ENCODE measurements at regions of chr12 and their contacts with region 1.

Region 1: DNA sequence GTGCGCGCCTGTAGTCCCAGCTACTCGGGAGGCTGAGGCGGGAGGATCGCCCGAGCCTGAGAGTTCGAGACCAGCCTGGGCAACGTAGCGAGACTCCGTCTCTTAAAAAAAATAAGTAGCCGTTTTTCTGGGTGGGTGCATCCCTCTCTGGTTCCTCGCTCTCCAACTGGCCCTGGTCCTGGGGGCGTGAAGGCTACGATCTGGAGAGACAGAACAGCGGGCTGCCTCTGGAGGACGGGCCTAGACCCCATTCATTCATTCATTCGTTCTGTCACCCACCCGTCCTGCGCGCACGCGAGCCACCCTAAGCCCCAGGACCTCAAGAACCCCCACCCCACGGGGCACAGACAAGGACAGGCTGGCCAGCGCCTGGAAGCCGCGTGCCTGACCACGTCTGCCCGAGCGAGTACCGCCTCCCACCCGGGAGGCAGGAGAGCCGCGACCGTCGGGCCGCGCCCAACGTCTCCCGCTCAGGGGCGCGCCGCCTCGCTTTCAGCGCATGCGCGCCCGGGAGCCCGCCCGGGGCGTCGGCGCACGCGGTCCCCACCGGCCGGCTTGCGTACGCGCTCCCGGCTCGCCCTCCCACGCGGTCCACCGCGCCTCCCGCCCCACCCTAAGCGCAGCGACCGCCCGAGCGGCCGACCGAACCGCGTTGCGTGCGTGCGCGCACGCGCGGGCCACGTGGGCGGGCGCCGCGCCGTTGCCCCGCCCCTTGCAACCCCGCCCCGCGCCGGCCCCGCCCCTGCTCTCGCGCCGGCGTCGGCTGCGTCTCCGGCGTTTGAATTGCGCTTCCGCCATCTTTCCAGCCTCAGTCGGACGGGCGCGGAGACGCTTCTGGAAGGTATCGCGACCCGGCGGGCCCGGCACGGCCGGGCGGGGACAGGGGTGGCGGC is at the start of gene RAN:
- DNase-seq: peak; percentile 87
- H3K4me3 Mint-ChIP-seq: peak within 1 kb of the TSS; percentile 99
- H3K27ac Mint-ChIP-seq: peak within 1 kb of the TSS; percentile 99
- H3K4me1 Mint-ChIP-seq: peaks cover 53% of the 10 kb centered on the region
- H3K27me3 Mint-ChIP-seq: no peaks in the 10 kb centered on the region
- total RNA-seq, gene RAN: 1,823 and 1,852 TPM in 2 replicates

Region 2: GRCh38 chr12:130775953-130776856 is 95.3 kb before region 1 on chr12:
- intact Hi-C with region 1: loop called (anchors 1 kb)
- DNase-seq: no peak
- H3K4me3 Mint-ChIP-seq: peak overlapping the region; percentile 69
- H3K27ac Mint-ChIP-seq: no peak overlapping the region
- H3K4me1 Mint-ChIP-seq: peaks cover 15% of the 10 kb centered on the region
- H3K27me3 Mint-ChIP-seq: peaks cover 26% of the 10 kb centered on the region

Region 3: DNA sequence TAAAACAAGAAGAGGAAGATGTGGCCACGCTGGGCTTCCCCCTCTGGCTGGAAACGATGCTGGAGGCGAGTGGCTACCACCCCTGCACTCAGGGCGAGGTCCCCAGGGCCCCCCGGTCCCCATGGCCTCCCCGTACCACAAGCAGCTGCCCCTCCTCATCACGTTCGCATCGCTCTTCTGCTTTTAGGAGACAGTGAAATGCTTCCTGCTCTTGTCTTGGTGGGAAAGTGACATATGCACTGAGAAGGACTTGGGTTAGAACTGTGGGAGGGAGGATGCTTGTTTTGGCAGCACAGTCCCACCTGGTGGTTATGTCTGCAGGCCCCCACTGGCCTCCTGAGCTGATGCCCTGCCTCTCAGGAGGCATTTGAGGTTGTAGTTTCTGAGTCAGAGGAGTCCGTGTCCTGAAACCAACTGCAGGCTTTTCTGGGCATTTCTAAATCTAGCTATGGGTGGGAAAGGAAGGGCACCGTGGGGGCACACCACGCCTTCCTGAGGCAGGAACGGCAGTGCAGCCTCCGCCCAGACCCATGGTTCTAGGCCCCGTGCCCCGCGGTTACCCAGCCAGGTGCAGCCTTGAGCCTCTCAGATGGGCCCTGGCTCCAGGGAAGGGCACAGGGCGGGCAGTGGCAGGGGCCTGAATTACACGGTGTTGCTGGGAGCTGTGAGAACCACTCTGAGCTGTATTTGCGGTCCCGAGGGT is 221.5 kb after region 1 on chr12:
- intact Hi-C with region 1: loop called (anchors 5 kb)
- DNase-seq: peak; percentile 3
- H3K4me3 Mint-ChIP-seq: peak overlapping the region; percentile 24
- H3K27ac Mint-ChIP-seq: peak overlapping the region; percentile 45
- H3K4me1 Mint-ChIP-seq: peaks cover 21% of the 10 kb centered on the region
- H3K27me3 Mint-ChIP-seq: no peaks in the 10 kb centered on the region

Region 4: DNA sequence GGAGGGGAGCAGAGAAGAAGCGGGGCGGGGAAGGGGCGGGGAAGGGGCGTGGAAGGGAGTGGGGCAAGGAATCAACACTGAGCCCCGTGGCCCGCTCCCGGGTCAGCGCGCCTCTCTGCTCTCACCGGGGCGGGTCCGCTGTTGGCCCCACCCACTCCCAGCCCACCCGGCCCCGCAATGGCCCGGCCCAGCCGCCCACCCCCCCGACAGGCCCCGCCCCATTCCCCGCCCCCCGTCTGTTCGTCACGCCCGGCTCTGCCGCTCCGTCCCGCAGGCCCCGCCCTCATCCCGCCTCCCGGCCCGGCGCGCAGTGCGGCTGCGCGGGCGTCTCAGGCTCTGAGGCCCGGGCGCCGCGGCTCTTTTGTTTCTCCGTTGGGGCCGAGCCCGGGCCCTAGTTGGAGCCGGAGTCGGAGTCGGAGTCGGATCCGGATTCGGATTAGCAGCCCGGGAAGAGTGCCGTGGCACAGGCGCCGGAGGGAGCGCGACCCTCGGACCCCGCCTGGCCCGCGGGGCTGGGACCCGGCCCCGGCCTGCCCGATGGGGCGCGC is 1022.9 kb after region 1 on chr12 and contains the start of gene ULK1:
- intact Hi-C with region 1: loop called (anchors 10 kb)
- DNase-seq: peak; percentile 91
- H3K4me3 Mint-ChIP-seq: peak within 1 kb of the TSS; percentile 86
- H3K27ac Mint-ChIP-seq: peak within 1 kb of the TSS; percentile 78
- H3K4me1 Mint-ChIP-seq: no peaks in the 10 kb centered on the region
- H3K27me3 Mint-ChIP-seq: peaks cover 5% of the 10 kb centered on the region
- total RNA-seq, gene ULK1: 28.4 TPM in 2 replicates

Region 5: GRCh38 chr12:132761032-132761920 is 1889.7 kb after region 1 on chr12 and contains the start of gene ANKLE2:
- intact Hi-C with region 1: loop called (anchors 10 kb)
- DNase-seq: peak; percentile 74
- H3K4me3 Mint-ChIP-seq: peak within 1 kb of the TSS; percentile 93
- H3K27ac Mint-ChIP-seq: peak within 1 kb of the TSS; percentile 96
- H3K4me1 Mint-ChIP-seq: peaks cover 24% of the 10 kb centered on the region
- H3K27me3 Mint-ChIP-seq: no peaks in the 10 kb centered on the region
- total RNA-seq, gene ANKLE2: 151 and 156 TPM in 2 replicates

Measured in activated T-helper 1 cell treated with anti-CD3 and anti-CD28 coated beads, Interleukin-12 subunit alpha, Interleukin-12 subunit beta, Interleukin-2, Interleukin-4 antibody, amounts not matched to agents 30 ng/mL and 10 ng/mL and 1 ng/mL, durations not matched to agents 14 hours and 24 hours and 36 hours (primary cell).